MCF 10A (cell line): ENCODE measurements at regions of chr20 and their contacts with region 1.

Region 1: DNA sequence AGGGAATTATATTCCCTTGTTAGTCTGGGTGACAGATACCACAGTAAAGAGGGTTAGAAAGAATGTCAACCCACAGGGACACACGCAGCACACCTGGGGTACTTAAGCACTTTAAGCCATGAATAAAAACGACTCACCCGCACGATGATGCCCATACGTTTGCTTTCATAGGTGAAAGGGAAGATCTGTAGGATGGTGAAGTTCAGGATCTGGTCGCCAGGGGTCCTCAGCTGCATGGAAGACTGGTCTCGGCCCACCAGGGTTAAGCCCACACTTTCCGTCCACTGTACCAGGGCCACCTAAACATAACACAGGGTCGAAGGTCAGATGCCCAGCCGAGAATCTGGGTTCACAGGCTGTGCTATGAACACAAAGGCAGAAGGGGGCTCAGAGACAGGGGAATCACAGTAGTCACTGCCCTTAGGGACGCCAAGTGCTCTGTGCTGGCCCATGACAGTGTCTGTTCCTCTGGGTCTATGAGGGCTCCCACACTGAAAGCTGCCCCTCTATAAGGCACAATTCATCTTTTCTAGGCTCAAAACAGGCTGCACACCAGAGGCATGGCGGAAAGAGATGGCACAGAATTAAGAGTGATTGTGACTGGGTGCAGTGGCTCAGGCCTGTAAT is 96.8 kb upstream of the NFATC2 start:
- DNase-seq: peak; percentile 76
- H3K4me3 Mint-ChIP-seq: no peak overlapping the region
- H3K27ac Mint-ChIP-seq: peak overlapping the region; percentile 53
- H3K4me1 Mint-ChIP-seq: no peaks in the 10 kb centered on the region
- H3K27me3 Mint-ChIP-seq: no peaks in the 10 kb centered on the region
- CTCF ChIP-seq: peak; percentile 91

Region 2: DNA sequence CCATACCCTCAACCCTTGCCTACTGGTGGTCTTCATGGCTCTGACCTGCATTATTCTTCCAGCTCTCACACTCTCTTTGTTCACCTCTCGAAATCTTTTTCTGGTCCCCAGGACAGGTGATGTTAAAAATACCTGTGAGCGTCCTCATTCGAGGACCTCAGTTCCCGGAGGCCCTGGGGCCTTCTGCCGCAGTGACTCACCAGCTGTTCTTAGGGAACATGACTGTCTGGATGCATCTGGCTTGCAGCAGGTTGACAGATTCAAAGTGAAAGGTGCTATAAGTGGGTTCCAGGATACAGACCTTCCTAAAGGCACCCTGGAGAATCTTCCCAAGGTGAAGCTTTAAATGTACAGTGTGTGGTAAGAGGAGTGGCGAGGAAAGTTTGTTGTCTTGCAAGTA is 406.0 kb before region 1 on chr20:
- CTCF ChIA-PET with region 1: no interaction called
- POLR2A ChIA-PET with region 1: no interaction called
- intact Hi-C with region 1: no loop called
- DNase-seq: no peak
- H3K4me3 Mint-ChIP-seq: no peak overlapping the region
- H3K27ac Mint-ChIP-seq: no peak overlapping the region
- H3K4me1 Mint-ChIP-seq: no peaks in the 10 kb centered on the region
- H3K27me3 Mint-ChIP-seq: peaks cover 22% of the 10 kb centered on the region
- CTCF ChIP-seq: no peak

Region 3: DNA sequence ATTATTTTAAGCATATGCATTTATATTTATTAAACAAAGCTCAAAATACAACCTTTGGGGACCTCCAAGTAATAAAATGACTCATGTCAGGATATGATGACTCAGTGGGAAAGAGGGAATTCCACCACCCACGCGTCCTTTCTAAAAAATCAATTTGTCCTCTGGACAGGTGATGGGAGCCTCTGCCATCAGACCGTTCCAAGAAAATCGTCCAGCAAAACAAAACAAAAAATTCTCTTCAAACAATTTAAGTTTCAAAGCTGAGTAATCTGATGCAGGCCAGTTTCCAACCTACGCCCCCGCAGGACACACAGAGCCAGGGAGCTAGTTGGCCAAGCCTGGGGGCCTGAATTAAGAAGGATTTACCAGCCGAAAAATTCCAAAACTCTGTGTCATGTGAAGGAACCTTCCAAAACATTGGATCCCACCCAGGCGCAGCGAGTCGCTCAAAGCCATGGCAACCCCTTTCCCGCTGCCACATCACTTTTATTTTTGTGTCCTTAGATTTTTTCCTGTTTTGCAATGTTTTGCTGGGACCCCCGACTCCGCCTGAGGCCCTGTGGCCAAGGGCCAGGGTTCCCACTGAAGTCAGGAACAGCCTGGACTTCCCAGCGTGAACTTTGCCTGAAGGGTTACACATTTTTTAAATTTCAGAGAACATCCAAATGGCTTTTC is 192.1 kb before region 1 on chr20:
- CTCF ChIA-PET with region 1: no interaction called
- POLR2A ChIA-PET with region 1: no interaction called
- intact Hi-C with region 1: no loop called
- DNase-seq: peak; percentile 97
- H3K4me3 Mint-ChIP-seq: no peak overlapping the region
- H3K27ac Mint-ChIP-seq: no peak overlapping the region
- H3K4me1 Mint-ChIP-seq: peaks cover 9% of the 10 kb centered on the region
- H3K27me3 Mint-ChIP-seq: no peaks in the 10 kb centered on the region
- CTCF ChIP-seq: no peak

Region 4: DNA sequence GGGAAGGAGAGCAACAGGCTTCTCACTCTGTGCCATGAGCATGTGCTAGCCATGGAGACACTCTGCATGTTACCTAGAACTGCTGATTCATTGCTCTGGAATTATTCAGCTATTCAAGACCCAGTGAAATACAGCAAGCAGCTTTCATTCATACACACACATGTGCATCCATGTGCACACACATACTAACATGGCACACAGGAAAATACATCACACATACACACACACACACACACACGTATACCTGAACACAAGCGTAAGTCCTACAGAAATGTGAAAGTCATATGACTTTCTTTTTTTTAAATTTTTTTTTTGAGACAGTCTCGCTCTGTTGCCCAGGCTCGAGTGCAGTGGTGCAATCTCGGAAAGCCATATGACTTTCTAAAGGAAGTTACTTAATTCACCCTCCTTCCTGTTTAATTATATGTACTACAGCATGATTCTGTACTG is 11.4 kb after region 1 on chr20:
- CTCF ChIA-PET with region 1: interaction called, 10 read pairs
- POLR2A ChIA-PET with region 1: no interaction called
- intact Hi-C with region 1: no loop called
- DNase-seq: peak; percentile 55
- H3K4me3 Mint-ChIP-seq: no peak overlapping the region
- H3K27ac Mint-ChIP-seq: no peak overlapping the region
- H3K4me1 Mint-ChIP-seq: peaks cover 6% of the 10 kb centered on the region
- H3K27me3 Mint-ChIP-seq: no peaks in the 10 kb centered on the region
- CTCF ChIP-seq: no peak

Region 5: GRCh38 chr20:51678026-51678697 is 38.8 kb after region 1 on chr20:
- CTCF ChIA-PET with region 1: no interaction called
- POLR2A ChIA-PET with region 1: no interaction called
- intact Hi-C with region 1: no loop called
- DNase-seq: no peak
- H3K4me3 Mint-ChIP-seq: no peak overlapping the region
- H3K27ac Mint-ChIP-seq: no peak overlapping the region
- H3K4me1 Mint-ChIP-seq: no peaks in the 10 kb centered on the region
- H3K27me3 Mint-ChIP-seq: no peaks in the 10 kb centered on the region
- CTCF ChIP-seq: no peak

Region 6: DNA sequence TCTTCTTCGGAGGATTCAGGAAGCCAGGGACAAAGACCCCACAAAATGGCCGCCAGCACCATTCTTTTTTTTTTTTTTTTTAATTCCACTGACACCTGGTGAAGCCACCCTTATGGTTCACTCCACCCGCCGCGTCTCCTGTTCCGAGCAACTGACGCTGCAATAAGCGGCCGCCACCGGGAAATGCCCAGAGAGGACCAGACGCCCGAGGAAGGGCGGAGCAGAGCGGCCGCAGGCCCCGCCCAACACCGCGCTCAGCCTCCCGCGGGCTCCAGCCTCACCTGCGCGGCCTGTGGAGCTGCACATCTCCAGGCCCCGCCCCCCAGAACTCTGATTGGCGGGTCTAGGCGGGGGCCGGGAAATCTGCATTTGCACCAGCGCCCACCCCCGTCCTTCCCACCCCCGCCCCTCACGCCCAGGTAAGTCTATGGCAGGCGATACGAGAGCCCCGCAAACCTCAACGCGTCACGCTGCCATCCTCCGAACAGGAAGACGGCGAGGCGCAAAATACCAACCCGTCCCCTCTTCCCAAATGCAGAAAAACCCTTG is 127.8 kb after region 1 on chr20:
- CTCF ChIA-PET with region 1: interaction called, 4 read pairs
- POLR2A ChIA-PET with region 1: no interaction called
- intact Hi-C with region 1: loop called (anchors 10 kb)
- DNase-seq: peak; percentile 88
- H3K4me3 Mint-ChIP-seq: peak overlapping the region; percentile 68
- H3K27ac Mint-ChIP-seq: peak overlapping the region; percentile 54
- H3K4me1 Mint-ChIP-seq: peaks cover 6% of the 10 kb centered on the region
- H3K27me3 Mint-ChIP-seq: no peaks in the 10 kb centered on the region
- CTCF ChIP-seq: no peak

Region 7: DNA sequence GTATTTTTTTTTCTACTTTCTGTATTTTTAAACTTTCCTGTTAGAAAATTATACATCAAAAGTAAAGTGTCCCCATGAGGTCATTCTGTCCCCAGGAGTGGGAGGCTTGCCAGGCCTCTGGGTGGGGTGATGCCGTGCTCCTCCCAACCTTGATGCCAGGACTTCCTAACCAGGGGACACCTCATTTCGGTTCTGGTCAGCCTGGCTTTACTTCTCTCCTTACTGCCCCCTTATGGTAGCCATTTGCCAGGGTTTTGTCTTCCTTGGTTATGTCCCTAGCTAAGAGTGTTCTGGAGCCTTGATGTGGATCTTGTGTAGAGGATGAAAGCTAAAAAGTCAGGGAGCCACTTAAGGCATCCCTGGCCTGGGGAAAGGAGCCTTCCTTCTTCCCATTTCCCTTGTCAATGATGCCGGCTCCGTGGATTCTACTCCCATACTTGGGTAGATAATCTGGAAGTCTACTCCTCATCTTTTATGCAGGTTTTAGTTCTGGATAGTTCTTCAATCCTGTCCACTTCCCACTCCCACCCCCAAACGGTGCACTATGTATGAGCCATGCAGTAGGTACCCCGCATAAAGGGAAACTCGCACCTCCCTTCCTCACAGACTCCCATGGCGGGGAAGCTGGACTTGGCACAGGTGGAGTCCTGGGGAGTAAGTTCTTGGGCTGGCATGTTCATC is 327.1 kb after region 1 on chr20:
- CTCF ChIA-PET with region 1: interaction called, 4 read pairs
- POLR2A ChIA-PET with region 1: no interaction called
- intact Hi-C with region 1: loop called (anchors 1 kb)
- DNase-seq: peak; percentile 79
- H3K4me3 Mint-ChIP-seq: no peak overlapping the region
- H3K27ac Mint-ChIP-seq: no peak overlapping the region
- H3K4me1 Mint-ChIP-seq: no peaks in the 10 kb centered on the region
- H3K27me3 Mint-ChIP-seq: no peaks in the 10 kb centered on the region
- CTCF ChIP-seq: peak; percentile 57

Region 8: DNA sequence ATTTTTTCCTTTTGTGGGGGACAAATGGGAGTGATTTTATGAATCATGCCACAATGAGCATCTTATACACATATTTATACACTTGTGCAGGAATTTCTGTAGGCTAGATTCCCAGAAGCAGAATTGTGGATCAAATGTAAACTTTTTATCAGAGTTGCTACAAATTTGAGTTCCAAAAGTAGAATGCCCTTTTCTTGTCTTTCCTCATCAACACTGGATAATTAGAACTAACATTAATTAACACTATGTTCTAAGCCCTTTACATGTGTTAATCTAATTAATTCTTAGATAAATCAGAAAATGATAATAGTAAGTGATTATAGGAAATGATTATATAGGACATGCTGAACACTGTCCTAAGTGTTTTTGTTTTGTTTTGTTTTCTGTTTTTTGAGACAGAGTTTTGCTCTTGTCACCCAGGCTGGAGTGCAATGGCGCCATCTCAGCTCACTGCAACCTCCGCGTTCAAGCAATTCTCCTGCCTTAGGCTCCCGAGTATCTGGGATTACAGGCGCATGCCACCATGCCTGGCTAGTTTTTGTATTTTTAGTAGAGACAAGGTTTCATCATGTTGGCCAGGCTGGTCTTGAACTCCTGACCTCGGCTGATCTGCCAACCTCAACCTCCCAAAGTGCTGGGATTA is 360.1 kb after region 1 on chr20:
- CTCF ChIA-PET with region 1: no interaction called
- POLR2A ChIA-PET with region 1: no interaction called
- intact Hi-C with region 1: no loop called
- DNase-seq: no peak
- H3K4me3 Mint-ChIP-seq: no peak overlapping the region
- H3K27ac Mint-ChIP-seq: no peak overlapping the region
- H3K4me1 Mint-ChIP-seq: no peaks in the 10 kb centered on the region
- H3K27me3 Mint-ChIP-seq: no peaks in the 10 kb centered on the region
- CTCF ChIP-seq: no peak

Region 9: GRCh38 chr20:52060794-52061714 is 421.7 kb after region 1 on chr20:
- CTCF ChIA-PET with region 1: interaction called, 6 read pairs
- POLR2A ChIA-PET with region 1: no interaction called
- intact Hi-C with region 1: loop called (anchors 1 kb)
- DNase-seq: peak; percentile 33
- H3K4me3 Mint-ChIP-seq: no peak overlapping the region
- H3K27ac Mint-ChIP-seq: no peak overlapping the region
- H3K4me1 Mint-ChIP-seq: peaks cover 9% of the 10 kb centered on the region
- H3K27me3 Mint-ChIP-seq: no peaks in the 10 kb centered on the region
- CTCF ChIP-seq: peak; percentile 32